Adrenal gland (tissue), 19 donors: ENCODE measurements at regions of chr2 and their contacts with region 1.

Region 1: GRCh38 chr2:182186132-182186735 is 200.6 kb downstream of the PPP1R1C start:
- DNase-seq: no peak
- H3K4me3 ChIP-seq: no peak overlapping the region
- H3K27ac ChIP-seq: no peak overlapping the region
- H3K4me1 ChIP-seq: no peaks in the 10 kb centered on the region
- H3K27me3 ChIP-seq: no peaks in the 10 kb centered on the region
- CTCF ChIP-seq: peak; percentile 68 to 88 (median 84)
- POLR2A ChIP-seq: no peak

Region 2: GRCh38 chr2:181916726-181917718 is 269.2 kb before region 1 on chr2:
- intact Hi-C with region 1: no loop called
- DNase-seq: peak in 3 of 7 donors; percentile 11 to 26 (median 20)
- H3K4me3 ChIP-seq: no peak overlapping the region
- H3K27ac ChIP-seq: no peak overlapping the region
- H3K4me1 ChIP-seq: peaks cover 0 to 5% of the 10 kb centered on the region in 2 donors
- H3K27me3 ChIP-seq: no peaks in the 10 kb centered on the region
- CTCF ChIP-seq: no peak
- POLR2A ChIP-seq: no peak

Region 3: DNA sequence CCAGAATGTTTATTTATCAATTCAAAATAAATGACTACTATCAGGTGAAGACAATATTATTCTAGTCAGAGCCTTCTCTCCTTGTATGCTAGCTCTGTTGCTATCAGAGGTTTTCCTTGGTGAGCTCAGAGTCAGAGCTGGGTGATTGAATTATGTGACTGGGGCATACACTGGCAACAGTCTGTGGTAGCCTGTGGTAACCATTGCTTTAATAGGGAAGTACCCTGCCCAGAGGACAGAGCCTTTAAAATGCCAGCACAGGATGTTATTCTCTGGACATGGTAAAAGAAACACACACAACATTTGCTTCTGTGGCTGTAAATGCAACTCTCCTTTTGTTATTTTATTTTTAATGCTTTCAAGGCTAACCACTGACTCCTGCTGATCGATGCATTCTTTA is 75.9 kb before region 1 on chr2:
- intact Hi-C with region 1: no loop called
- DNase-seq: no peak
- H3K4me3 ChIP-seq: no peak overlapping the region
- H3K27ac ChIP-seq: no peak overlapping the region
- H3K4me1 ChIP-seq: no peaks in the 10 kb centered on the region
- H3K27me3 ChIP-seq: no peaks in the 10 kb centered on the region
- CTCF ChIP-seq: no peak
- POLR2A ChIP-seq: no peak

Region 4: DNA sequence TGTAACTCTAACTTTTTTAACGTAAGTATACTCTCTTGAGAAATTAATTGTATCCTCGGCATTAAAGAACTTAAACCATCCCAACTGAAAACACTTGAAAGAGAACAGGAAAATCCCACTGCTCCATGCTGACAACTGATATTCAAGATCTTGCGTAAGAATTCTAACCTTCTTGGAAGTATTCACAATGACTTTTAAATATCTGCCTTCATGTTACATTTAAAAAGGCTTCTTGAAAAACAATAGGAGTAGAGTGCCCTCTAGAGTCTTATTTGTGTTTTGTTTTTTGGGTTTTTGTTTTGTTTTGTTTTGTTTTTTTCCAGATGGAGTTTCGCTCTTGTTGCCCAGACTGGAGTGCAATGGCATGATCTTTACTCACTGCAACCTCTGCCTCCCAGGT is 464.5 kb after region 1 on chr2:
- intact Hi-C with region 1: loop called (anchors 5 to 10 kb)
- DNase-seq: no peak
- H3K4me3 ChIP-seq: no peak overlapping the region
- H3K27ac ChIP-seq: no peak overlapping the region
- H3K4me1 ChIP-seq: no peaks in the 10 kb centered on the region
- H3K27me3 ChIP-seq: no peaks in the 10 kb centered on the region
- CTCF ChIP-seq: peak; percentile 38 to 91 (median 61)
- POLR2A ChIP-seq: no peak